GM13977 (cell line): ENCODE measurements at regions of chr1 and their contacts with region 1.

Region 1: GRCh38 chr1:93804412-93804811 is 74.6 kb downstream of the DNTTIP2 start:
- DNase-seq: no peak
- CTCF ChIP-seq: no peak

Region 2: GRCh38 chr1:93629099-93630059 is 175.0 kb before region 1 on chr1:
- in situ Hi-C with region 1: loop called (anchors 10 kb)
- DNase-seq: peak; percentile 70
- CTCF ChIP-seq: peak; percentile 82